Naive thymus-derived CD4-positive, alpha-beta T cell (primary cell): ENCODE measurements at regions of chr2 and their contacts with region 1.

Region 1: DNA sequence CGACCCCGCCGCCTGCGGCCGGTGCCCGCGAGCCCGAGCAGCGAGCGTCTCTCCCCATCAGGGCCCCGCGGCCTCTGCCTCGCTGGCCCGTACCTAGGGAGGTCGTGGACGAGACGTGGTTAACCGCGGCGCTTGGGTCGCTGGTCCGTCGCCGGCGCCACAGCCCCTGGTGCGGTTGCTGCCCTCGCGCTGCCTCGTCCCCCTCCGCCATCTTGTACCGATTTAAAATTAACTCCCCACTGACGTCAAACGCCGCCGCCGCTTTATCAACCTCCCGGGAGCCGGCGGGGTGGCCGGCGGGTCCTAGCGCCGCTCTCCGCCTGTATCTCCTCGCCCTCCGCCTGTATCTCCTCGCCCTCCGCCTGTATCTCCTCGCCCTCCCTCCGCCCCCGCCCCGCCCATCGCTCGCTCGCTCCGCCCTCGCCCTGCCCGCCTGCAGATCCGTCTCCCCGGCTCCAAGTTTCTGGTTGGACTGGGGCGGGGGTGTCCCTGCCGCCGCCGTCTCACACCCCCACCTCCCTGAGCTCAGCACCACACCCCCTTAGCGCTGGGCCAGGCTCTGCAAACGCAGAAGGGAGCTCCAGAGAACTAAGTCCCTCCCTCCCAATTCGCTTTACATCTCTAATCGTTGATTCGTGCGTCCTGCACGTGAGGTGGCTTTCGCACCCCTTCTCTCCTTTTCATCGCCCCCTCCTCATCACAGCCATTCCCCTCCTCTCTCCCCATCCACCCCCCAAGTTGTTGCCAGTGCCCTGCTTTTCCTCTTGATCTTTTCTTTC is at the start of gene ATL2:
- DNase-seq: peak; percentile 83 to 94 (median 92)
- ATAC-seq: peak; percentile 92
- H3K4me3 ChIP-seq: peak within 1 kb of the TSS; percentile 75
- H3K4me3 Mint-ChIP-seq: peak within 1 kb of the TSS; percentile 93 to 100 (median 97)
- H3K27ac ChIP-seq: peak within 1 kb of the TSS; percentile 98
- H3K27ac Mint-ChIP-seq: peak within 1 kb of the TSS; percentile 87 to 99 (median 95)
- H3K4me1 ChIP-seq: peaks cover 28 to 30% of the 10 kb centered on the region in 2 donors
- H3K4me1 Mint-ChIP-seq: peaks cover 53 to 83% (median 68%) of the 10 kb centered on the region in 7 donors
- H3K27me3 ChIP-seq: no peaks in the 10 kb centered on the region
- H3K27me3 Mint-ChIP-seq: peaks cover 0 to 3% (median 0%) of the 10 kb centered on the region in 5 donors
- total RNA-seq, gene ATL2: 45.5 to 59.5 (median 53.0) TPM

Region 2: DNA sequence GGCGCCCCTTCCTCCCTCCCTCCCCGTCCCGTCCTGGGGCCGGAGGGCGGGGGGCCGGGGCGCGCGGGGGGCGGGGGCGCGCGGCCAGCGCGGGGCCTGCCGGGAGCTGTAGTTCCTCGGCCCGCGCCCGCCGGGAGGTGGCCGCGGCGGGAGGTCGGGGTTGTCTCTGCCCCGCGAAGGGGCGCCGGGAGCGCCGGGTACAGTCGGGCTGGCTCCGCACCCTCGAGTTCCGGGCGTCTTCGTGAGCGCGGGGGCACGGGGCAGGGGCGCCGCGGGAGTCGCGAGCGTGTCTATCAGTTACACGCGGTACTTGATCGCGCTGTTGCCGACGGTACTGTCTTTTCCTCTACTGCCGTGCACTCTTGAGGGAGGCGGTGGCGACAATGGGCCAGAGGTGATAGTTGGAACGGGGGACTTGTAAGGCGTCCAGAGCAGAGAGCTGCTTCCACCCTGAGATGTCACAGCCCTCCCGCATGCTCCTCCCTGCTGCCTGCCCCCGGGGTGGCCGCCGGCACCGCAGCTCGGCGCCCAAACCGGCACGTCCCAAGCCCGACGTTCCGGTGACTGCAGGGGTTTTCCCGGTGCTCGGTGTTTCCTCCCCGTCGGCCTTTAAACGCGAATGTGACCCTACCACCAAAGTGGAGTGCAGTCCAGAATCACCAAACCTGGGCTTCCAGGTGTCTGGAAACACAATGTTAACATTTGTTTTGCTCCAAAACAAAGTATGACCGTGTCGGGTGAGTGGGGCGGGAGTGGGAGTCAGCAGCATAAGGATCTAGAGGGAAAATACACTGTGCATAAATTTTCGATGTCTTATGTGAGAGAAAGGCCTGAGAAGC is 1052.2 kb before region 1 on chr2 and contains the start of gene PRKD3:
- CTCF ChIA-PET with region 1: no interaction called
- POLR2A ChIA-PET with region 1: no interaction called
- intact Hi-C with region 1: loop called in 1 of 2 experiments (anchors 2 kb)
- DNase-seq: peak; percentile 46 to 72 (median 65)
- ATAC-seq: peak; percentile 88
- H3K4me3 ChIP-seq: peak within 1 kb of the TSS; percentile 75
- H3K4me3 Mint-ChIP-seq: peak within 1 kb of the TSS; percentile 95 to 99 (median 98)
- H3K27ac ChIP-seq: peak within 1 kb of the TSS; percentile 73
- H3K27ac Mint-ChIP-seq: peak within 1 kb of the TSS; percentile 92 to 98 (median 95)
- H3K4me1 ChIP-seq: peaks cover 30 to 31% of the 10 kb centered on the region in 2 donors
- H3K4me1 Mint-ChIP-seq: peaks cover 18 to 48% (median 36%) of the 10 kb centered on the region in 7 donors
- H3K27me3 ChIP-seq: no peaks in the 10 kb centered on the region
- H3K27me3 Mint-ChIP-seq: peaks cover 0 to 56% (median 21%) of the 10 kb centered on the region in 5 donors
- total RNA-seq, gene PRKD3: 12.8 to 47.3 (median 46.4) TPM

Region 3: DNA sequence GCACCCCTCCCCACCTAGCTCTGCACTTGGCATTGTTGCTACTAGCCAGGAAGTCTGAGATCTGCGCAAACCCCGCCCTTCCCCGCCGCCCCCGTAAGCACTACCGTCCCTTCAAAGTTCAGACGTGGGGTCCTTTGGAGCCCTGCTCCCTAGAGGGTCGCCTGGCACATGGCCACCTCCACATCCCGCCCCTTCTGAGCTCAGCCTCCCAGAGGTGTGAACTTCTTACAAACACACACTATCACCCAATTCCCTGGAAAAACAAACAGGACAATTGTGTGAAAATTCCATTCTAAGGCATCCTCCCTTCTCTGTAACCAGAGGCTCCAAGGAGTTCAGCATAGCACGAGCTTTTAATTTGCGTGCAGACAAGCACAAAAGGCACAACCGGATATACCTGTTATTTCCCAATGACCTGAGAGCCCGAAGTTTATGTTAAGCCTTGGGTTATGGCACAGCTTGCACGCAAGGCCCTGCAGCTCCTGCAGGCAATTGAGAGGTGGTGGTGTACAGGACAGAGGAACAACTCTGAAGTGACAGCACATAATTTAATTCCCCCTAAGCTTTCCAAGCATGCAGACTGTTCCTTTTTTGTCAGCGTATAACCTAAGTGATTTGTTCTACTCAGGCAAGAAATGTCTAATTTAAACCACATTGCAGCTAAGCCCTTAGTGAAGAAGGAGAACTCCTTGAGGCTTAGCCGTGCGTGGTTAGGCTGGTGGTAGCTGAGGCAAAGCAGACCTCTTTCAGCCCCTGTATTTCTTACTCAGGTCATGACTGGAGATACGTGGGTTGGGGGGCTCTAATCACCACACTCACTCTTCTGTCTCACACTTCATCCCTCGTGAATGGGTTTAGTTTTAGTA is 281.0 kb before region 1 on chr2:
- CTCF ChIA-PET with region 1: no interaction called
- POLR2A ChIA-PET with region 1: no interaction called
- intact Hi-C with region 1: no loop called
- DNase-seq: no peak
- ATAC-seq: peak; percentile 38
- H3K4me3 ChIP-seq: no peak overlapping the region
- H3K4me3 Mint-ChIP-seq: peak overlapping the region in 2 of 10 donors; percentile 10 to 33
- H3K27ac ChIP-seq: no peak overlapping the region
- H3K27ac Mint-ChIP-seq: peak overlapping the region in 1 of 9 donors; percentile 16
- H3K4me1 ChIP-seq: no peaks in the 10 kb centered on the region
- H3K4me1 Mint-ChIP-seq: peaks cover 0 to 32% (median 8%) of the 10 kb centered on the region in 7 donors
- H3K27me3 ChIP-seq: peaks cover 5 to 9% of the 10 kb centered on the region in 2 donors
- H3K27me3 Mint-ChIP-seq: peaks cover 53 to 88% (median 71%) of the 10 kb centered on the region in 5 donors

Region 4: DNA sequence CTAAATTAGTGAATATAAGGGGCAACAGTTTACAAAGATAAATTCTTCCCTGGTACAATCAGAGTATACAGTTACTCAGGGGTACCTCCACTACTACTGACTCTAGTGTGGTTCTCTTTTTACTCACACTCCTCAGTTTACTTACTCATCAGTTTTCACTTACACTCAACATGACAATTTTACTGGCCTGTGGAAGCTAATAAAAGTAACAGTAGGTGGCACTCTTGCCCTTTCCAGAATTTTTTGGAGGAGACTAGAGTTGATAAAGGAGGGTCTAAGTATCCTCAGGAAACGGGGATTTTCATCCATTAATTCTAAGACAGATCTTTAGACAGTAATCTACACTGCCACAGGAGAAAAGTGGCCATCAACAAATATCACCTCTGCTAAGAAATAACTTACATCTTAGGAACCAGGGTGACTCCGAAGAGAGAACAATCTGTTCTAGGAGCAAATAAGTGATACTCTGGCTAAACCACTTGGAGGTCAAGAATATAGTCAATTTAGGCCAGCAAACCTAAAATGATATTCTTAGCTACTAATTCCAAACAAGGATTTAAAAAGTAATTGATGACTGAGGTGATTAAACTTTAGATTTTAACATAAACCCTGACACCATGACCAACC is 61.4 kb before region 1 on chr2:
- CTCF ChIA-PET with region 1: interaction called, 9 read pairs
- POLR2A ChIA-PET with region 1: no interaction called
- intact Hi-C with region 1: loop called (anchors 1 to 2 kb)
- DNase-seq: peak in 7 of 9 donors; percentile 14 to 50 (median 33)
- ATAC-seq: peak; percentile 66
- H3K4me3 ChIP-seq: no peak overlapping the region
- H3K4me3 Mint-ChIP-seq: no peak overlapping the region
- H3K27ac ChIP-seq: no peak overlapping the region
- H3K27ac Mint-ChIP-seq: no peak overlapping the region
- H3K4me1 ChIP-seq: no peaks in the 10 kb centered on the region
- H3K4me1 Mint-ChIP-seq: peaks cover 0 to 6% (median 0%) of the 10 kb centered on the region in 7 donors
- H3K27me3 ChIP-seq: no peaks in the 10 kb centered on the region
- H3K27me3 Mint-ChIP-seq: no peaks in the 10 kb centered on the region

Region 5: GRCh38 chr2:38409156-38410122 is 32.2 kb after region 1 on chr2:
- CTCF ChIA-PET with region 1: no interaction called
- POLR2A ChIA-PET with region 1: no interaction called
- intact Hi-C with region 1: no loop called
- DNase-seq: no peak
- ATAC-seq: no peak
- H3K4me3 ChIP-seq: no peak overlapping the region
- H3K4me3 Mint-ChIP-seq: no peak overlapping the region
- H3K27ac ChIP-seq: no peak overlapping the region
- H3K27ac Mint-ChIP-seq: no peak overlapping the region
- H3K4me1 ChIP-seq: no peaks in the 10 kb centered on the region
- H3K4me1 Mint-ChIP-seq: no peaks in the 10 kb centered on the region
- H3K27me3 ChIP-seq: no peaks in the 10 kb centered on the region
- H3K27me3 Mint-ChIP-seq: peaks cover 0 to 7% (median 0%) of the 10 kb centered on the region in 5 donors

Region 6: GRCh38 chr2:38430597-38431207 is 53.5 kb after region 1 on chr2:
- CTCF ChIA-PET with region 1: interaction called, 5 read pairs
- POLR2A ChIA-PET with region 1: no interaction called
- intact Hi-C with region 1: loop called in 1 of 2 experiments (anchors 2 kb)
- DNase-seq: no peak
- ATAC-seq: no peak
- H3K4me3 ChIP-seq: no peak overlapping the region
- H3K4me3 Mint-ChIP-seq: no peak overlapping the region
- H3K27ac ChIP-seq: no peak overlapping the region
- H3K27ac Mint-ChIP-seq: no peak overlapping the region
- H3K4me1 ChIP-seq: no peaks in the 10 kb centered on the region
- H3K4me1 Mint-ChIP-seq: peaks cover 0 to 2% (median 0%) of the 10 kb centered on the region in 7 donors
- H3K27me3 ChIP-seq: no peaks in the 10 kb centered on the region
- H3K27me3 Mint-ChIP-seq: peaks cover 0 to 9% (median 0%) of the 10 kb centered on the region in 5 donors

Region 7: GRCh38 chr2:38643021-38643671 is 265.9 kb after region 1 on chr2:
- CTCF ChIA-PET with region 1: interaction called, 3 read pairs
- POLR2A ChIA-PET with region 1: no interaction called
- intact Hi-C with region 1: loop called in 1 of 2 experiments (anchors 5 kb)
- DNase-seq: no peak
- ATAC-seq: no peak
- H3K4me3 ChIP-seq: no peak overlapping the region
- H3K4me3 Mint-ChIP-seq: peak overlapping the region in 6 of 10 donors; percentile 74 to 81 (median 76)
- H3K27ac ChIP-seq: no peak overlapping the region
- H3K27ac Mint-ChIP-seq: peak overlapping the region; percentile 85 to 94 (median 88)
- H3K4me1 ChIP-seq: peaks cover 6 to 8% of the 10 kb centered on the region in 2 donors
- H3K4me1 Mint-ChIP-seq: peaks cover 12 to 45% (median 18%) of the 10 kb centered on the region in 7 donors
- H3K27me3 ChIP-seq: no peaks in the 10 kb centered on the region
- H3K27me3 Mint-ChIP-seq: no peaks in the 10 kb centered on the region

Region 8: DNA sequence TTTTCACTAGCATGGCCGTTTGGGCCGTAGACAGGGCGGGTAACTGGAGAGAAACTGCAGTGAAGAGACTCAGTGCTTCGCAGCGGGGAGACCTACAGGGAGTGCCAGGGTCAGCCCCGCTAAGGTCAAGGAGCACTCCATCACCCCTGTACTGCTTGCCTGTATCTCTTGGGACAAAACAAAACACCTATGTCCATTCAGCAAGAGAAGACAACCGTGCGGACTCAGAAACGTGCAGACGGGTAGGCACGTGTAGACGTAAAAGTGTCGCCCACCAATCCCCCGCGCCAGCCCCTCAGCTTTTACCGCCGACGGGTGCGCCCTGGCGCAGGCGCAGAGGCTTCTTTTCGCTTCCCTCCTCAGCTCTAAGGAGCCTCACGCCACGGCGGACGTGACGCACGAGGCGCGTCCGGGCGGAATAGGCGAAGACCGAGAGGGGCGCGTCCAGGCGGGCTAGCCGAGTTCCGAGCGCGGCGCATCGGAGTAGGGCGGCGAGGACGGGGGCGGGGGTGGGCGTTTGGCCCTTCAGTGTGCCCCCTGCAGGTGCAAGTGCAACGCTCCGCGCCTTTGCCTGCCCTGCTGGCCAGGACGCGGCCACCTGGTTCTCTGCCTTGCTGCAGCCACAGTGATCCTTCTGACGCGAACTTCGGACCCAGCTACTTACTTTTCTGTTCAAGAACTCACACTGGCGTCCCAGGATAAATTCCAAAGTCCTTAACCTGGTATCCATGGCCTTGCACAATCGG is 746.9 kb after region 1 on chr2:
- CTCF ChIA-PET with region 1: no interaction called
- POLR2A ChIA-PET with region 1: no interaction called
- intact Hi-C with region 1: loop called (anchors 2 to 5 kb)
- DNase-seq: peak; percentile 89 to 97 (median 93)
- ATAC-seq: peak; percentile 89
- H3K4me3 ChIP-seq: peak overlapping the region; percentile 98
- H3K4me3 Mint-ChIP-seq: peak overlapping the region; percentile 88 to 99 (median 92)
- H3K27ac ChIP-seq: peak overlapping the region; percentile 92
- H3K27ac Mint-ChIP-seq: peak overlapping the region; percentile 92 to 99 (median 95)
- H3K4me1 ChIP-seq: peaks cover 38% of the 10 kb centered on the region in 2 donors
- H3K4me1 Mint-ChIP-seq: peaks cover 12 to 68% (median 62%) of the 10 kb centered on the region in 7 donors
- H3K27me3 ChIP-seq: no peaks in the 10 kb centered on the region
- H3K27me3 Mint-ChIP-seq: no peaks in the 10 kb centered on the region